Posterior cingulate gyrus (tissue), 11 donors: ENCODE measurements at regions of chr2 and their contacts with region 1.

Region 1: DNA sequence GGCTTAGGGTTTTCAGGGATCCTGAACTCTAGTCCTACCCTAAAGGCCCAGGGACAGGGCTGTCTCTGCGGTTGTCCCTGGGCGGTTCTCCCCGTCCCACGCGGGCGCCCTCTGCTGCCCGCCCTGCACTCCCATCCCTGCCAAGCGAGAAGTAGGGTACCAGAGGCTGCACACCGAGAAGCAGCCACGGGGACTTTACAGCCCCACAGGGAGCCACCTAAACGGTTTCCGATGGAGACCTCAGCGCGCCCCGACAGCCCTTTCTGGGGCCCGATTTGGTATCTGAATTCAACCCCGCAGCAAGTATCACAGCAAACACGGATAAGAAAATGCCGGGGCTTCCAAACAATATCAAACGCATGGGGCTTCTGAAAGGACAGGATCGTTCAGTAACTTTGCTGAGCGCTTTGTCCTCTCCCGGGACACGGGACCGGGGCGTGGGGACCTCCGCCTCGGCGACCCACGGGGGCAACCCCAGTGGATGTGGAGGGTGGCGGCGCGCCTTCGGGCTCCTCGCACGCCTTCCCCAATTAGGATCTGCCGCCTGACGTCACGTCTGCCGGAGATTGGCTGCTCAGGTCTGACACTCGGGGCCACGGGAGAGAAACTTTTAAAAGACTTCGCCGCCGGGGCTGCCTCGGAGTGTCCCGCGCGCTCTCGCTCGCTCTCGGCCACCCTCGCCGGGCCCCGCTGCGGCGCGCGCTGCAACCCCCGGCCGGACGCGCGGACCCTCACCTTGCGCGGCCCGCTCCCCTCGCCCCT is at the start of gene LTBP1:
- DNase-seq: peak in 9 of 10 donors; percentile 39 to 94 (median 56)

Region 2: DNA sequence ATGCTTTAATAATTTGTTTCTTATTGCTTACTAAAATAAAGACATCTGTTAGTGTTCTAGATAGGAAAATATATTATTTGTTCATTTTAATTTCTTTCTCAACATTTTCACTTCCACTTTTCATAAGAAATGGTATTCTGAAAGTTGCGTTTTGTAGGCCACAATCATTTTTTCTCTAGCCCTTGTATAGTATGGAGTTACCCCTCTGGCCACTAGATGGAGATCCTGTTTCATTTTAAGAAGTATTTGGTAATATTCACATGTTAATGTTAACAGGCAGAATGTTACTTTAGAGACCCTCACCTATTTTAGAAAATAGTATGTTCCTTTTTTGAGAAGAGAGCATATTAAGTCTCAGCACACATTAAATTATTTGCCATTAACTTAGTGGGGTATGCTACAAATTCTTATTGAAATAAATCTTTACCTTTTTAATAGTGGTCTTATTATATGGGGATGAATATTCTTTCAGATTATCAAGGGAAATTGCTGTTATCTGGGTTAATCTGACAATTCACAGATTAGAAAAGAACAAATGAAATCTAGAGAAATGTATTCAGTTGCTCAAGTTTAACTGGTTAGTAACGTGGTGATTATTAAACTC is 392.6 kb before region 1 on chr2:
- intact Hi-C with region 1: loop called (anchors 10 kb)
- DNase-seq: no peak

Region 3: GRCh38 chr2:32825291-32825712 is 121.2 kb before region 1 on chr2:
- intact Hi-C with region 1: loop called (anchors 5 kb)
- DNase-seq: peak in 7 of 10 donors; percentile 21 to 85 (median 41)

Region 4: GRCh38 chr2:33190393-33190937 is 244.0 kb after region 1 on chr2:
- intact Hi-C with region 1: no loop called
- DNase-seq: no peak